Posterior vena cava (tissue), 2 donors: ENCODE measurements at regions of chr4 and their contacts with region 1.

Region 1: DNA sequence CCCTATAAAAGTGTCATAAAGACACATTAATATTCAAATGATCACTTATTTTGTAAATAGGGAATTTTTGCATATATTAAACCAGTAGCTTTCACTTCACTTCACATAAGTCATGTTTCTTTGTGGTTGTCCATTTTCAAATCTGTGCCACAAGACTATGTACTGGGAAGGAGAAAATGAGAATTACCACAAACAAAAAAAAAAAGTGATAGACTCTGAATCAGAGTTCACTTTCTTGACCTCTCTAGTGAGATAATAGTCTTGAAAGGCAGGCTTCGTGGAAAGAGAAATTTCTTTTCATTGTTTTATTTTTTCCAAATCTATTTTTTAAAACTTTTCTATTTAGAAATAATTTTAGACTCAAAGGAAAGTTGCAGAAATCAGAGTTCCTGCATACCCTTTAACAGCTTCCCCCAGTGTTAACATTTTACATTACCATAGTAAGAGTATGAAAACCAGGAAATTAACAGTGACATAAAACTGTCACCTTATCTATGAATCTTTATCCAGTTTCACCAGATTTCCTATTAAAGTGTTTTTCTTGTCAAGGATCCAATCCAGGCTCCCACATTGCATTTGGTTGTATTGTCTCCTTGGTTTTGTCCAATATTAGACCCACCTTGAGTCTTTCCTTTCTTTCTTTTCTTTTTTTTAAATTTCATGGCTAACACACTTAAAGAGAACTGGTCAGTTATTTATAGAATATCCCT is 215.4 kb upstream of the PGRMC2 start:
- DNase-seq: no peak

Region 2: DNA sequence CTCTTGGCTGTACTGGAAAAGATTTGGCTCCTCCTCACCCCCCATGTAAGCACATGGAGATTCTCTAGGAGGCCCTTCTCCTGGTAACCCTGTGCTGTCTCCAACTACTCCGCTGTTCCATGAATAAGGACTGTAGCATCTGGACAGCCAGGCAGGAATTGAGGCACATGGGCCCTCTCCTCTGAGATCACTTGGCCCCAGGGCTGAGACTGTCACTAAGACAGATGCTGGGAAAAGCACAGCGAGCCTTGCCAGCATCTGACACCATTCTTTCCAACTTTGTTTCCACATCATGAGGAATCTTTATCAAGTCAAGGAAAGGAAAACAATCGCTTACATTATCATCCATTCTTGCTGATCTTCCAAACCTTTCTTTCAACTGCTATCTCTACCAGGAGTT is 1092.8 kb before region 1 on chr4:
- intact Hi-C with region 1: loop called in 1 of 2 experiments (anchors 10 kb)
- DNase-seq: peak; percentile 84

Region 3: DNA sequence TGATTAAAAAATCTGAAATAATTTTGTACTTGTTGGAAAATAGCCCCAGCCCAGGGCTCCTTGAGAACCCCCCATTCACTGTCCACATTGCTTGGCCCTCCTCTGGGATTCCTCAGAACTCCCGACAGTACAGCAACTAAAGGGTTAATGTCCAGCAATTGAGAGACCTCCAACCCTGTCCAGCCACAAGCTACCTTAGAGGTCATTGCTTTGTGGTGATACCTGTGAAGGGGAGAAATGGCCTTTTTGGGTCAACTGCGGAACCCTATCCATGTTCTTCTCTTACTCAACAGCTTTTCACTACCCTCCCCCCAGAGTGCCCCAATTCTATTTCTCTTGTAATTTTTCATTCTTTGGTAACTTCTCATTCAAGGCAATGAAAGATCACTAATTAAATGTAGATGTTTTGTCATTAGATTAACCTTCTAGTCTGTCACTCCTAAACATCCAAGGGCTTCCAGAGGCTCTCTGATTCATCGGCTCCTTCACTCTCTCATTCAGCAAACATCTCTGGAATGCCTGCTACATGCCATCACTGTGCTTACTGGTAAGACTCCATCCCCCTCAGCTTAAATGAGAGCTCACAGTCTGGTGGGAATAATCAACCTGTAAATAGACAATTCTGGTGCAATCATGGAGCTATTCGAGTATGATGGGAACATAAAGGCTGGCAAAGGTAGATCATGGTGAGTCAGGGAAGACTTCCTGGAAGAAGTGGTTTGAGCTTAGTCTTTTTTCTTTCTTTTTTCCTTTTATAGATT is 26.0 kb after region 1 on chr4:
- intact Hi-C with region 1: no loop called
- DNase-seq: no peak

Region 4: DNA sequence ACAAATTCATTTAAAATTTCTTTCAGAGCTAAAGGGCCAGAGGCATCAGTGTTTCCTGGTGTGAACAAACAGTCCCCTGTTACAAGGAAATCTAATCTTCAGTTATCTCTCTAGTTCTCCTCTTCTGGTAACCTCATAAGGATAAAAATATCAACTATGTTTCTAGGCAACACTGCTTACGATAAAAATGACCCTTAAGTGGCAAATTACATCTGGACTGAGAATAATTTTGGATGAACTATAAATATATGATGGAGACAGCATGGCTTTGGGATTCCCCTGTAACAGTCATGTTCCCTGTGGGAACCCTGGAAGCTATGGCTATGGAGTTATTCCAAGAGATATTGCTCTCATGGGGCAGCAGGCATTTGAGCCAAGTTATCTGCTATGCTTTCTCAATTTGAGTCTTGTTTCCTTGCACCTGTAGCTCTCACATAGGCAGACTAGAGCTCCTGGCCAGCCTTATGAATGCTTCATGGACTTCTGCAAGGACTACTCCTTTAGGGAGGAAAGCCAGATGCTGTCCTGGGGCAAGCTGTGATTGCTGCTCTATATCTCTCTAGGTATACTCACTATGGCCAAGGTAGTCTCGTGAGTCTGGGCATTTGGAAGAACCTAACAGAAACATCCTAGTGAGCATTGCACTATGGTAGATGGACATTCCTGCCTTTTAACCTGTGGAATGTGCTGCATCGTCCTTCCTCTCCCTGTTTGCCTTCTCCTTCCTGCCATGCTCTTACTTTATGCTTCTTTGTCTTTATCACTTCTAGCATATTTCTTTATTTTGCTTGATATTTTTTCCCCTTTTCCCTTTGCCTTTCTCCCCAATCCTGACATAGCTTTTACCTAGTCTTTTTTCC is 607.2 kb after region 1 on chr4:
- intact Hi-C with region 1: no loop called
- DNase-seq: no peak